ENCODE measurements at regions of chr3 and their contacts with region 1.

Region 1: DNA sequence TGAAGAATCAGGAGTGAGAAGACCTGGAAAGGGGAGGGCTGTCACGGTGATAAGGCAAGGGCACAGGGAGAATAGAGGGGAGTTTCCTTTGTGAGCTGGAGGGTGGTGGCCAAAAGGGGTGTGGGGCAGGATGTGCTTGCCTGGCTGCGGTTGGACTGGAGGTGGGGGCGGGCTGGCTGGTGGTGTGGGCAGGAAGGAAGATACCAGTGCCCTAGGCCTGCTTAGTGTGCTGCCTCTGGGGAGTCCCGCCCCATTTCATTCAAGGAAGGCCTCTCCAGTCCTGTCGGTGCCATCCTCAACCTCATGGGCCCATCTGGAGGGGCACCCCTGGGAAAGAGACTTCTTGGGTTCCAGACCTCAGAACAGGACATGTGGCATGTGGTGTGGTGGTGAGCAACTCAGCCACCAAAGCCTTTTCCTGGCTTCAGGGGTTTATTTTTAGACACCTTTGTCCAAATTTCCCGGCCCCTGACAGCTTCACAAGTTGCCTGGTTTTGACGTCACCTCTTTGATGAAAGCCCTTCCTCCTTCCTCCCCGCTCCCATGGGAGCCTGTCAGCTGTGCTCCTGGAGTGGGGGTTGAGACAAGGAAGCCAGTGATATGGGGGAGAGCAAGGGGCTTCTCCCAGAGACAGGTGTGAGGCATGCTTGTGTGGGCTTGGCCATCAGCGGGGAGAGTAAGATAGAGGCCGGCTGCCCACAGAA is 15.6 kb downstream of the TEX264 start:
- DNase-seq: no peak
- H3K4me3 ChIP-seq: no peak overlapping the region
- H3K27ac ChIP-seq: peak overlapping the region; percentile 62
- H3K4me1 ChIP-seq: peaks cover 35% of the 10 kb centered on the region
- H3K27me3 ChIP-seq: no peaks in the 10 kb centered on the region
- CTCF ChIP-seq: no peak
- POLR2A ChIP-seq: no peak

Region 2: GRCh38 chr3:51501833-51502561 is 184.7 kb before region 1 on chr3:
- intact Hi-C with region 1: loop called (anchors 5 kb)
- DNase-seq: no peak
- H3K4me3 ChIP-seq: no peak overlapping the region
- H3K27ac ChIP-seq: no peak overlapping the region
- H3K4me1 ChIP-seq: peaks cover 8% of the 10 kb centered on the region
- H3K27me3 ChIP-seq: no peaks in the 10 kb centered on the region
- CTCF ChIP-seq: peak; percentile 93 to 94 (median 94)
- POLR2A ChIP-seq: no peak

Region 3: GRCh38 chr3:51519848-51520247 is 166.8 kb before region 1 on chr3:
- intact Hi-C with region 1: no loop called
- DNase-seq: no peak
- H3K4me3 ChIP-seq: no peak overlapping the region
- H3K27ac ChIP-seq: no peak overlapping the region
- H3K4me1 ChIP-seq: no peaks in the 10 kb centered on the region
- H3K27me3 ChIP-seq: no peaks in the 10 kb centered on the region
- CTCF ChIP-seq: no peak
- POLR2A ChIP-seq: no peak